Posterior cingulate gyrus (tissue), 11 donors: ENCODE measurements at regions of chr7 and their contacts with region 1.

Region 1: GRCh38 chr7:102412548-102412947 is 16.4 kb downstream of the PRKRIP1 start:
- DNase-seq: peak in 6 of 10 donors; percentile 55 to 92 (median 75)

Region 2: DNA sequence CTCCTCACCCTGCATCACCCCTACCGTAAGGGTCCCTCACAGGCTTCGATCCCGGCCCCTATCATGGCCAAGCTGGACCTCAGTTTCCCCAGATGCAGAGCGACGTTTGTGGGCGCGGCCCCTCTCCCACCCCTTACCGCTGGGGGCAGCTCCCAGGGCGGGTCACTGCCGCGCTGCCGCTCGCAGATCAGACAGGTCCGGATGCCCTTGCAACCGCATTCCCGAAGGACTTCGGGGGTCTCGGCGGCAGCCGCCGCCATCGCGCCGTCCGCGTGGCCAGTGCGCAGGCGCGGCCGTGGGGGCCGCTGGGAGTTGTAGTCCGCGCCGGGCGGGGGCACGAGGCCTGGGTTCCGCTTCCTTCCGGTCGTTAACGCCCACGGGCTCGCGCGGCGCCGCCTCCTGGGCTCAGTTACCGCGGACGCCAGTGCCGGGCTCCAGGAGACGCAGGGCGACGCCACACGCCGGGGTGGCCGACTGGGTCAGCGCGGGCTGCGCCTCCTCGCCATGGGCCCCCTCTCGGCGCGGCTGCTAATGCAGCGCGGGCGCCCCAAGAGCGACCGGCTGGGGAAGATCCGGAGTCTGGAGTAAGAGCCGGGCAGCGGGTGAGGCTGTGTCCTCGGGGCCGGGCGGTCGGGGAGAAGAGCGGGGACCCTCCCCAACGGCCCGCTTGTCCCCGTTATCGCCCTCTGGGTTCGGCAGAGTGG is 52.2 kb after region 1 on chr7 and contains the starts of genes ALKBH4 and LRWD1:
- intact Hi-C with region 1: loop called (anchors 10 kb)
- DNase-seq: peak; percentile 83 to 99 (median 92)